H1 (cell line): ENCODE measurements at regions of chr5 and their contacts with region 1.

Region 1: GRCh38 chr5:35926389-35927051 is 11.9 kb downstream of the CAPSL start:
- DNase-seq: peak in 1 of 2 experiments; percentile 81
- H3K4me3 ChIP-seq: no peak overlapping the region
- H3K27ac ChIP-seq: no peak overlapping the region
- H3K4me1 ChIP-seq: no peaks in the 10 kb centered on the region
- H3K27me3 ChIP-seq: peaks cover 5 to 23% (median 17%) of the 10 kb centered on the region in 4 experiments
- CTCF ChIP-seq: peak in 2 of 3 experiments; percentile 84 to 93; a peak in 3 of 4 replicates
- EP300 ChIP-seq: no peak
- POLR2A ChIP-seq: no peak
- RAD21 ChIP-seq: peak; percentile 95 to 97

Region 2: GRCh38 chr5:35657877-35658276 is 268.6 kb before region 1 on chr5:
- CTCF ChIA-PET with region 1: interaction called, 22 read pairs
- POLR2A ChIA-PET with region 1: no interaction called
- DNase-seq: no peak
- H3K4me3 ChIP-seq: no peak overlapping the region
- H3K27ac ChIP-seq: no peak overlapping the region
- H3K4me1 ChIP-seq: peaks cover 0 to 3% (median 0%) of the 10 kb centered on the region in 4 experiments; a peak in 3 of 7 replicates
- H3K27me3 ChIP-seq: no peaks in the 10 kb centered on the region
- CTCF ChIP-seq: no peak
- EP300 ChIP-seq: no peak
- POLR2A ChIP-seq: no peak
- RAD21 ChIP-seq: no peak

Region 3: GRCh38 chr5:35678661-35679060 is 247.9 kb before region 1 on chr5:
- CTCF ChIA-PET with region 1: interaction called, 16 read pairs
- POLR2A ChIA-PET with region 1: no interaction called
- DNase-seq: no peak
- H3K4me3 ChIP-seq: no peak overlapping the region
- H3K27ac ChIP-seq: no peak overlapping the region
- H3K4me1 ChIP-seq: no peaks in the 10 kb centered on the region
- H3K27me3 ChIP-seq: no peaks in the 10 kb centered on the region
- CTCF ChIP-seq: no peak
- EP300 ChIP-seq: no peak
- POLR2A ChIP-seq: no peak
- RAD21 ChIP-seq: no peak

Region 4: DNA sequence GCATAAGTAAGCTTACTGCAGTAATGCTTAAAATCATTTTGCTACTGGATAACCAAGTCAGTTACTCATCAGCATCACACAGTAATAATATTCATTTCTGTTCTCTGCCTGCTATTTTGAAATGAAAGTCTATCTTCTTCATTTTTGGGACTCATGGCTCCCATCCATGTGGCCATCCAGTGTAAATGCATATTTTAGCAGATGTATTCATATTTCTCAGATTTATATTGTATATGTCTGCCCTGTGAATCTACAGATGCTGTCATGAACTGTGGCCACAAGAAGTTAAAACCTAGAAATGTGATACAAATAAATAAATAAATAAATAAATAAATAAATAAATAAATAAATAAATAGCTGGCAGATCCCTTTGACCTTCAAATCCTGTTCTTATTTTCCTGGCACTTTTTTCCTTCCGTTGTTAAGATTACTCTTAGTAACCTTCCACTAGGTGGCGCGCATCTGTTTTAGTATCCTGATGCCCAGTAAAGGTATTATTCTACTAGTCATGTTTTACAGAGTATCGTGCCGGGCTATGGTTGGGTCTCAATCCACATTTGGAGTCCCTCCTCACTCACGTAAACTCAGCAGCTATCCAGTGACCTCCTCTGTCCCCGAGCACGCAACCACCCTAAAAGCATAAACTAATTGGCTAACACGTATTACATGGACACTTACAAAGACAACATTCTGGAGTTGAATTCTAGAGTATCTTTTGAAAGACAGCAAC is 149.0 kb before region 1 on chr5:
- CTCF ChIA-PET with region 1: interaction called, 65 read pairs
- POLR2A ChIA-PET with region 1: no interaction called
- DNase-seq: peak in 1 of 2 experiments; percentile 68
- H3K4me3 ChIP-seq: no peak overlapping the region
- H3K27ac ChIP-seq: no peak overlapping the region
- H3K4me1 ChIP-seq: no peaks in the 10 kb centered on the region
- H3K27me3 ChIP-seq: peaks cover 0 to 1% (median 0%) of the 10 kb centered on the region in 4 experiments; a peak in 1 of 7 replicates
- CTCF ChIP-seq: peak in 2 of 3 experiments; percentile 52; a peak in 2 of 4 replicates
- EP300 ChIP-seq: no peak
- POLR2A ChIP-seq: no peak
- RAD21 ChIP-seq: peak; percentile 60 to 68

Region 5: GRCh38 chr5:35811108-35811741 is 115.3 kb before region 1 on chr5:
- CTCF ChIA-PET with region 1: interaction called, 18 read pairs
- POLR2A ChIA-PET with region 1: no interaction called
- DNase-seq: no peak
- H3K4me3 ChIP-seq: no peak overlapping the region
- H3K27ac ChIP-seq: no peak overlapping the region
- H3K4me1 ChIP-seq: no peaks in the 10 kb centered on the region
- H3K27me3 ChIP-seq: no peaks in the 10 kb centered on the region
- CTCF ChIP-seq: no peak
- EP300 ChIP-seq: no peak
- POLR2A ChIP-seq: no peak
- RAD21 ChIP-seq: no peak

Region 6: GRCh38 chr5:35938568-35939227 is 12.2 kb after region 1 on chr5 and contains the start of gene CAPSL:
- CTCF ChIA-PET with region 1: interaction called, 27 read pairs
- POLR2A ChIA-PET with region 1: no interaction called
- DNase-seq: peak; percentile 70 to 79
- H3K4me3 ChIP-seq: no peak within 1 kb of the TSS
- H3K27ac ChIP-seq: no peak within 1 kb of the TSS
- H3K4me1 ChIP-seq: no peaks in the 10 kb centered on the region
- H3K27me3 ChIP-seq: no peaks in the 10 kb centered on the region; a peak in 1 of 7 replicates
- CTCF ChIP-seq: no peak
- EP300 ChIP-seq: no peak
- POLR2A ChIP-seq: no peak
- RAD21 ChIP-seq: no peak
- total RNA-seq, gene CAPSL: not detected in 2 replicates